ENCODE measurements at regions of chr7 and their contacts with region 1.

Region 1: DNA sequence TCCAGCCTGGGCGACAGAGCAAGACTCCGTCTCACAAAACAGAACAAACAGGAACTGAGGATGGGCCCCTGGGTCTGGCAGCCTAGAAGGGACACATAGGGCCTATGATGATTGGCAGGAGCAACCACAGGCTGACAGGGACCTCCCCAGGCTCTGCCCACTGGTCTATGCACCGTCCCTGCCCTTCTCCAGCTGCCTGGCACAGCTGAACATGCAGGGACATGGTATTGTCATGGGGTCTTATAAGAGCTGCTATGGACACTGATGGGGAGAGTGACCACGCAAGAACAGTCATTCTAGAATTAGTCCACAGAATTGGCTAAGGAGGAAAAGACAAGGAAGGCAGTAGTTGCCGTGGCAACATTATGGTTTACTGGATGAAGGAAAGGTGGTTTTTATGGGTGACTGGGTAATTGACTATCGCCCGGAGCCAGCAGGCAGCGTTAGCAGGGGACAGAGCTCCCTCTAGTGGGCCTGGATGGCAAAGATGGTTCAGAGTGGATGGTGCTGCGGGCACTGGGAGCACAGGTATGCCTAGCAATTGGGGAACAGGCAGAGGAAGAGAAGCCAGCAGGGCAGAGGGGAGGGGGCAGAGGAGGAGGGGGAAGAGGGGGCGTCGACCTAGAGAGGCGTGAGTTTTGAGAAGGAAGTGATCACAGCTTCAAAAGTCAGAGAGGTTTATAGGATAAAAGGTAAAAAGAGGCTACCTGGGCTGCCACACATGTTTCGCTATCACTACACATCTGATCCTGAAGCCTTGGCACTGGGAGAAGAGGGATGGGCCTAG is 7.8 kb upstream of the TRIM56 start:
- DNase-seq: peak; percentile 70 to 77
- ATAC-seq: peak; percentile 72 to 91 (median 84)
- H3K4me3 ChIP-seq: no peak overlapping the region
- H3K27ac ChIP-seq: no peak overlapping the region
- H3K4me1 ChIP-seq: no peaks in the 10 kb centered on the region
- H3K27me3 ChIP-seq: no peaks in the 10 kb centered on the region
- CTCF ChIP-seq: peak; percentile 73

Region 2: DNA sequence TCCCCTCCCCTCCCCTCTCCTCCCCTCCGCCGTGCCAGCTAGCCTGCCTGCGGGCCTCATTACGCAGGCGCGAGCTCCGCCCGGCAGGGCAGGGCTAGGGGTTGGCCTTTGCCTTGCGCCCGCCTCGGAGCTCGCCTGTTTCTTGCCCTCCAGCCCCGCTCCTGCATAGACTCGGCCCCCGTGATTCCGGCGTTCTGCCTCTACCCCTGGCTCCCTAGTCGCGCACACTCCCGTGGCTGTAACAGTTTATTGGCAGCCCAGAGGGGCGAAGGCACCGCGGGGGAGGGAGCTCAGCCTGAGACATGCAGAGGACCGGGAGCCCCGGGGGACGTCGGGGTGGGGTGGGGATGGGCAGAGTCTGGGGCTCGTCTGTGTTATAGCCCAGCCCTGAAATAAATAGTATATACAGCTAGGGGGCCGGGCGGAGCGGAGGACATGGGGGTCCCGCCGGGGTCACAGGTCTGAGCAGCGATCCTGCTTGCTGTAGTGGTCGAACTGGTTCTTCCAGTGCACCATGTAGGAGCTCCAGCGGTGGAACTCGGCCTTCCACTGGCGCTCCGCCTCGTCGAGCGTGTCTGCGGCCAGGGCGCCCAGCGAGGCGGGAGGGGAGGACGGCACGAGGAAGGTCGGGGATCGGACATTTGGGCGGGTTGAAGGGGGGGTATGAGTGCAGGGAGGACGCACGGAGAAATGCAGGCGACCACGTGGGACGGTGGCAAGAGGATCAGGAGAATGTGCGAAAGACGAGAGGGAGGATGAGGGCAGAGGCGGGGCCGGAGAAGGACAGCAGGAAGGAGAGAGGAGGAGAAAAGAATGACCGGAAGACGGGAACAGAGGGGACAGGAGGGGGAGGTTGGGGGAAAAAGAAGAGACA is 187.5 kb before region 1 on chr7:
- intact Hi-C with region 1: loop called (anchors 5 kb)
- DNase-seq: peak; percentile 94 to 98
- ATAC-seq: peak; percentile 85 to 89 (median 86)
- H3K4me3 ChIP-seq: peak overlapping the region; percentile 77
- H3K27ac ChIP-seq: peak overlapping the region; percentile 89
- H3K4me1 ChIP-seq: peaks cover 36% of the 10 kb centered on the region
- H3K27me3 ChIP-seq: no peaks in the 10 kb centered on the region
- CTCF ChIP-seq: no peak

Measured in psoas muscle (tissue), 8 donors.